ENCODE measurements at regions of chr3 and their contacts with region 1.

Region 1: GRCh38 chr3:182735672-182736071 is 57.6 kb upstream of the ATP11B start:
- DNase-seq: peak; percentile 79
- H3K4me3 ChIP-seq: no peak overlapping the region
- H3K27ac ChIP-seq: peak overlapping the region; percentile 52
- H3K4me1 ChIP-seq: peaks cover 11% of the 10 kb centered on the region
- H3K27me3 ChIP-seq: no peaks in the 10 kb centered on the region
- CTCF ChIP-seq: no peak
- POLR2A ChIP-seq: no peak

Region 2: DNA sequence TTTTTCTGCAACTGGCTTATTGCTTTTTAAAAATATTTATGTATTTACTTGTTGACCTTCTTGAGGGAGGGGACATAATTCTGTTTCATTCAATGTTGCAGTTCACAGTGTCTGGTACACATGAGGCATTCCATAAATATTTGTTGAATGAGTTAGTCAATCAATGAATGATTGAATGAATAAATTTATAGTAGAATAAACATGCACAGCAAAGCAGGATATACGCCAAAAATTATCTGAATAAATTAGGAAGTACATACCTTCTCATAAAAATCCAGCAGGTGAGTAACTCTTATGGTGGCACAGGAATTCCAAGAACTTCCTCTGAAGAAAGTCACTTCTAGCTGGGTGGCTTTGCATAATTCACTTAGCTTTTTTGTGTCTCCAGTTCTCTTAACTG is 411.8 kb before region 1 on chr3:
- CTCF ChIA-PET with region 1: no interaction called
- POLR2A ChIA-PET with region 1: no interaction called
- dilution Hi-C with region 1: no loop called
- intact Hi-C with region 1: no loop called
- DNase-seq: no peak
- H3K4me3 ChIP-seq: no peak overlapping the region
- H3K27ac ChIP-seq: no peak overlapping the region
- H3K4me1 ChIP-seq: no peaks in the 10 kb centered on the region
- H3K27me3 ChIP-seq: no peaks in the 10 kb centered on the region
- CTCF ChIP-seq: no peak
- POLR2A ChIP-seq: no peak

Region 3: GRCh38 chr3:182785142-182785541 is 49.5 kb after region 1 on chr3:
- CTCF ChIA-PET with region 1: interaction called, 3 read pairs
- POLR2A ChIA-PET with region 1: no interaction called
- dilution Hi-C with region 1: no loop called
- intact Hi-C with region 1: loop called (anchors 1 kb)
- DNase-seq: peak; percentile 86
- H3K4me3 ChIP-seq: no peak overlapping the region
- H3K27ac ChIP-seq: no peak overlapping the region
- H3K4me1 ChIP-seq: peaks cover 30% of the 10 kb centered on the region
- H3K27me3 ChIP-seq: no peaks in the 10 kb centered on the region
- CTCF ChIP-seq: no peak
- POLR2A ChIP-seq: no peak

Measured in endothelial cell of umbilical vein (primary cell).